ENCODE measurements at regions of chr10 and their contacts with region 1.

Region 1: DNA sequence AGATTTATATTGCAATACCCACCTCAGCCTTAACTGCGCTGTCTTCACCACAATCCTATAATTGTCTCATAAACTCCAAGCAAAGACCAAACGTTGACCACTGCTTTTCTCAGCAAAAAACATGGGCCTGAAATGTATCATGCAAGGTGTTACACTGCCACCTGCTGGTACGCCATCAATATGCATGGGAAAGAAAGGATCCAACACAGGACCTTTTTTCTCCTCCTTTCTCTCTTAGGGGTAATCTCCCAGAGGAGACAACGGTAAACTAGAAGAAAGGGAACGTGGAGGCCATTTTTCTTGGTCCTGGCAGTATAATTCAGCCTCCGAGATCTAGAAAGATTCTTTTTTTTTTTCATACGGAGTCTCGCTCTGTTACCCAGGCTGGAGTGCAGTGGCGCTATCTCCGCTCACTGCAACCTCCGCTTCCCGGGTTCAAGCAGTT is 79.1 kb upstream of the MPP7 start:
- DNase-seq: peak; percentile 89 to 90
- H3K4me3 ChIP-seq: no peak overlapping the region
- H3K4me1 ChIP-seq: no peaks in the 10 kb centered on the region
- H3K27me3 ChIP-seq: peaks cover 2% of the 10 kb centered on the region; the same call in 1 of the 2 replicates

Region 2: DNA sequence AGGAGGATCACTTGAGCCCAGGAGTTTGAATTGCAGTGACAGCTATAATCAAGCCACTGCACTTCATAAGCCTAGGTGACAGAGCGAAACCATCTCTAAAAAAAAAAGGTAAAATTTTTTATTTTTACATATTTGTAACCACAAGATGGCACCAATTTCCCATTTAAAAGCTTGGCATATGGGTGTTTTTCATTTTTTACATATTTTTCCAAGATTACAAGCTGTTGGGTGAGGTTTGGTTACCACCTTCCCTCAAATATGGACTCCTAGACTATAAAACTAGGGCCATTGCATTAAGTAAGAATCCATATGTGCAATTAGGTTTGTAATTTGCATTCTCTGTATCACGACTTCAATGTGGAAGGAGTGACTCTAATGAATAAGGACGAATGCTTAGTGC is 1012.0 kb before region 1 on chr10:
- in situ Hi-C with region 1: loop called (anchors 10 kb)
- DNase-seq: no peak
- H3K4me3 ChIP-seq: no peak overlapping the region
- H3K4me1 ChIP-seq: no peaks in the 10 kb centered on the region; the same call in 1 of the 2 replicates
- H3K27me3 ChIP-seq: no peaks in the 10 kb centered on the region

Region 3: DNA sequence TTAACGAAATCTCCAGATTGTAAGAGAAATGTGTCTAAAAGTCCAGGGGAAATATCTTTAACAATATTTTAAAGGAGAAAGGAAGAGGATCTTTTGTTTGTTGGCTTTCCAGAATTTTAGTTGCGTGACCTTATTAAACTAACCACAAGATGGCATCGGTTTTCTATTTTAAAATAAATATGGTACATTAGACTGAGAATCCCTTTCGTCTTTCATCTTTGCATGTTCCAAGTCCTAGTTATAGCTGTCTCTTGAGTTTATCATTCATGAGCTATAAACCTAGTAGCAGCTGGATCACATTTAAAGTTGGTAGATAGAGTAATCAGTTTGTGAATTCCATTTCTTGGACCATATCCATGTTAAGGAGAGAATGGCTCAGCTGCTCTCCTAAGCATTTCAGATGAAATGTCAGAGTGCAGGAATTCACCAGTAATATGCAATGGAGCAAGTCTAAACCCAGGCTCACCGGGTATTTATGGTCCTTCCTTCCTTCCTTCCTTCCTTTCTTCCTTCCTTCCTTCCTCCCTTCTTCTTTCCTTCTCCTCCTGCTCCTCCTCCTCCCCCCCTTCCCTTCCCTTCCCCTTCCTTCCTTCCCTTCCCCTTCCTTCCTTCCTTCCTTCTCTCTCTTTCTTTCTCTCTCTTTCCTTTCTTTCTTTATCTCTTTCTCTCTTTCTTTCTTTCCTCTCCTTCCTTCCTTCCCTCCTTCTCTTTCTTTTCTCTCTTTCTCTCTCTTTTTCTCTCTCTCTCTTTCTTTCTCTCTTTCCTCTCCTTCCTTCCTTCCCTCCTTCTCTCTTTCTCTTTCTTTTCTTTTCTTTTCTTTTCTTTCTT is 935.6 kb before region 1 on chr10:
- in situ Hi-C with region 1: loop called (anchors 10 kb)
- DNase-seq: peak in 1 of 2 experiments; percentile 43
- H3K4me3 ChIP-seq: no peak overlapping the region
- H3K4me1 ChIP-seq: no peaks in the 10 kb centered on the region
- H3K27me3 ChIP-seq: no peaks in the 10 kb centered on the region

Region 4: DNA sequence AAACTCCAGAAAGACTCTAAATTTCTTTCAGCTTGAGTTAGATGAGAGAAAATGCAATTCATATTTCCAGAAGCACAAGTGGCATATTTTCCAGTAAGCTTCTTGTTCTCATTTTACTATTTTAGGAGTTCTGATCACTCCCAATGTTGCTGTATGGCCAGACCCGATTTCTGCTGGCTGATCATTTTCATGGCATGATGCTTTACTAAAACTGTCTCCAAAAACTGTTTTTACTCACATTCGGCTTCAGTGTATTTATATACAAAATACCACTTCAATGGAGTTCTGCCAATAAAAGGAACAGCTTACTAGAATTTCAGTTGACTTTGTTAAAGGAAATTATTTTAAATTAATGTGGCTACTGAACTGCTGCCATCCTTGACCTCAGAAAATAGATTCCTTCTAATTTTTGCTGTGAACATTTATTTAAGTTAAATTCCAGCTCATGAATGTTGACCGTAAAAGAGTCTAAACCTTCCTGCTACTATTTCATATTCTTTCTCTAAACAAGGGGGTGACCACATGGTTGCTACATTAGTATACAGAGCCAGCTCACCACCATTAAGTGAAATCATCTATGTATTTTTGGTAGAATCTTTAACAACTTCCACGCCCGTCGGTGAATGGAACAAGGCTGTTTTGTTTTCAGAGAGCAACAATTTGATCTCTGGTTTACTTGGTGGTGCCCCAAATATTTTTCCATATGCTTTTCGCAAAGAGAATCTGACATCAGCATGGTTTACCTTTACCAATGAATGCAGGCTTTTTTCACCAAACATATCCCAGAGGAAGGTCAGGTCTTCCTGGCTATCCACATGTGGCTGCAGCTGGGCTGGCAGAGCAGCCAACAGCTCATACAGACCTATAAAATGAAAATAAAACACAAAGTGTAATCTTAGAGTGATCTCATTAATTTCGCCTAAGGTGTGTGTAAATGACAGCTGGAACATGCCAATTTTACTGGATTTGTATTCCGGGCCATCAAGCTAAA is 180.2 kb before region 1 on chr10:
- in situ Hi-C with region 1: no loop called
- DNase-seq: no peak
- H3K4me3 ChIP-seq: no peak overlapping the region
- H3K4me1 ChIP-seq: peaks cover 8% of the 10 kb centered on the region; the same call in 1 of the 2 replicates
- H3K27me3 ChIP-seq: no peaks in the 10 kb centered on the region